Activated B cell treated with CpG ODN at 0.5 μM for 24 hours (primary cell): ENCODE measurements at regions of chr1 and their contacts with region 1.

Region 1: DNA sequence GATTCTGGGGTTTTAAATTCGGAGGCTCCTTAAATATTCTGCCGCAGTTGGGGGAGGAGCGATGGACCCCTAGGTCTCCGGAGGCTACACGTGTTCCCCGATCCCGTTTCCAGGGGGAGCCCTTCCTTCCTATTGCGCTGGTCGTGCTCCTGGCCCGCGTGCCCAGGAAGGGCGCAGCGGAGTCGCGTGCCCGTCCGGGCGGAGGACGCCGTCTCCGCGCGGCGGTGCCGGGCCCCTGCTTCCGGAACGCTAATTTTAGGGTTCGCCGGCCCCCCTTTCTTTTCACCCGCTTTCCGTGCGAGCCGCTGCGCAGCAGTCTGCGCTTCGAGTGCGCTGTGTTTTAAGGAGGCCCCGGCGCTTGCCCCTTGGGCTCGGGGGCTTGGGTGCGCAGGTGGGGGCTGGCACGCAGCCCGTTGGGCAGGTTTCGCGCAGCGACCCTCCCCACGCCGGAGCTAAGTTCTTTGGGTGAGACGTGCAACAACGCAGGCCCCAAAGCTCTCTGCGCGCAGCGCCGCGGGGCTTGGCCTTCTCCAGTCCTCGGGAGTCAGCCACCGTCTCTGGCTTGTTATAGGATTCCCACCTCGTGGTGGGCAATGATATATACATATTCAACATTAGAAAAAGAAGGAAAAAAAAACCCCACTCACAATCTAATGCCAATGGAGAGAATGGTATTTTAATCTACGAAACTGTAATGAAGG is 43.5 kb upstream of the DNAJC6 start:
- DNase-seq: no peak
- ATAC-seq: no peak
- H3K4me3 Mint-ChIP-seq: peak overlapping the region; percentile 64
- H3K27ac Mint-ChIP-seq: no peak overlapping the region
- H3K4me1 Mint-ChIP-seq: peaks cover 16% of the 10 kb centered on the region
- H3K27me3 Mint-ChIP-seq: peaks cover 38% of the 10 kb centered on the region
- CTCF ChIP-seq: no peak

Region 2: GRCh38 chr1:65254319-65255034 is 11.3 kb before region 1 on chr1:
- CTCF ChIA-PET with region 1: no interaction called
- POLR2A ChIA-PET with region 1: no interaction called
- intact Hi-C with region 1: loop called (anchors 1 kb)
- DNase-seq: peak; percentile 81
- ATAC-seq: peak; percentile 97
- H3K4me3 Mint-ChIP-seq: peak overlapping the region; percentile 83
- H3K27ac Mint-ChIP-seq: no peak overlapping the region
- H3K4me1 Mint-ChIP-seq: peaks cover 12% of the 10 kb centered on the region
- H3K27me3 Mint-ChIP-seq: peaks cover 18% of the 10 kb centered on the region
- CTCF ChIP-seq: no peak

Region 3: GRCh38 chr1:66589326-66589725 is 1323.5 kb after region 1 on chr1:
- CTCF ChIA-PET with region 1: no interaction called
- POLR2A ChIA-PET with region 1: no interaction called
- intact Hi-C with region 1: no loop called
- DNase-seq: no peak
- ATAC-seq: no peak
- H3K4me3 Mint-ChIP-seq: no peak overlapping the region
- H3K27ac Mint-ChIP-seq: no peak overlapping the region
- H3K4me1 Mint-ChIP-seq: no peaks in the 10 kb centered on the region
- H3K27me3 Mint-ChIP-seq: no peaks in the 10 kb centered on the region
- CTCF ChIP-seq: no peak